Activated CD4-positive, alpha-beta memory T cell treated with anti-CD3 and anti-CD28 coated beads for 36 hours (primary cell): ENCODE measurements at regions of chr5 and their contacts with region 1.

Region 1: DNA sequence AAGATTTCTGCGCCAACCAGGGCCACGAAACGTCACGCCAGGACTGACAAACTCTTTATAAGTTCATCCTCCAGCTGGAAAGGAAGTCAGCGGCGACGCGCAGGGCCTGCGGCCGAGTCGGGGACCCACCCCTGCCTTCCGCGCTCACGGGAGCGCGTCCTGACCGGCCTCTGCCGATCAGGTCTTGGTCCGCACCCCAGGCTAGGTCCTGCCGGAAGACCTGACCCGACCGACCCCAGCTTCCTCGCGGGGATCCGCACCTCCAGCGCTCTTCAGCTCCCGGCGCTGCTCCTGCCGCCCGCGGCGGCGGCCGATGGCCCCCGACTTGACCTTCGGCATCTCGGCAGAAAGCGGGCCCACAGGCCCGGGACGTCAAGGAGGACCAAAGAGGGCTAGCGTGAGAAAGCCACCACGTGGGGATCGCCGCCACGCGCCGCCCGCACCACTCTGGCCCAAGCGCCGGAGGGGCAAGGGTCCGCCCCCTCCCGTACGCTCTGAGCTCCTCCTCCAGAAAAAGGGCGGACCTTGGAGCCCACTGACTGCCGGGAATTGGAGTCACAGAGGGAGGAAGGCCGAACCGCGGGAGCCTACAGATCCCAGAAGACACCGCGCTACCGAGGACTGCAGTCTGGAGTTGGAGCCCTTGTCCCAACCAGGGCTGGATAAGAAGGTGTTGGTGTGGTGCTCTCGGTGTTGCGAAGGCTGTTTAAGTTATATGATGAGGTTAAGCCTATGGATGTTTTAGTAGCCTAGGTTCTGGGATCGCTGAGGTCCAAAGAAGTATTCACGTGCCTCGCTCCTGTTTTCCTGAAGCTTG is at the start of gene DIMT1:
- DNase-seq: peak; percentile 97
- H3K4me3 Mint-ChIP-seq: peak within 1 kb of the TSS; percentile 100
- H3K27ac Mint-ChIP-seq: peak within 1 kb of the TSS; percentile 93
- H3K4me1 Mint-ChIP-seq: peaks cover 29% of the 10 kb centered on the region
- H3K27me3 Mint-ChIP-seq: no peaks in the 10 kb centered on the region
- total RNA-seq, gene DIMT1: 46.9 to 48.9 TPM

Region 2: DNA sequence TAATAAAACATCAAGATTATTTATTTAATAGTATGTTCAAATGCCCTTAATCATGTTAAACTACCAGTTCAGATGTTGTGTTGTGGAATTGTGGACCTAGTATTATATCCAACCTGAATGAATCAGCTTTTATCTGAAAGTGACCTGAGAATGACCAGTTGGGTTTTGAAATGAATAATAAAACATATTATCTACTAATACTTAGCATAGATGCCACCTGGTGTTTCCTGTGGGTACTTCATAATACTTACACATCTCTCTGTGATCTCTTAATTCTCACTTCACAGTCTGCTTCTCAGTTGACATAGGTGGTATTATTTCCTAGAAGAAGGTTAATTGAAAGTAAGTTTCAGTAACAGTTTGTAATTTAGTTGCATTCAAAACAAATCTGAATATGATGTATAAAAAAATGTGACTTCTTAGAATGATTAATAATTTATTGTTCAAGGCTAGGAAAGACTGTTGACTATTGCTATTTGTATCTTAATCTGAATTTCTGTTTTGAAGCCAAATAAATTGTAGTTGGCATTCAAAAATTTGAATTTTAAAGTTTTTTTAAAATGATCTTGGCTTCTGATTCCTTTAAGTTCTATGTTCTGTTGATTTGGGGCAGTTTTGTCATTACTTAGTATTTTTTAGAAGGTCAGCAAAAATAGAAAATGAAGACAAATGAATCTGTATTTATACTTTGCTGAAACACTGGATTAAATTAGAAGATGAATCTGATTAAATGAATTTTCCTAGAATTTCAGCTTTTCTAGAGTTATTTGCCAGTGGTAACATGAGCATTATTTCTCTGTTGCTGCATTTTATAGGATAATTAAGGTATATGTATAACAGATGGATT is 49.4 kb before region 1 on chr5:
- CTCF ChIA-PET with region 1: interaction called, 3 read pairs
- POLR2A ChIA-PET with region 1: no interaction called
- intact Hi-C with region 1: loop called (anchors 5 kb)
- DNase-seq: no peak
- H3K4me3 Mint-ChIP-seq: no peak overlapping the region
- H3K27ac Mint-ChIP-seq: no peak overlapping the region
- H3K4me1 Mint-ChIP-seq: peaks cover 20% of the 10 kb centered on the region
- H3K27me3 Mint-ChIP-seq: no peaks in the 10 kb centered on the region

Region 3: DNA sequence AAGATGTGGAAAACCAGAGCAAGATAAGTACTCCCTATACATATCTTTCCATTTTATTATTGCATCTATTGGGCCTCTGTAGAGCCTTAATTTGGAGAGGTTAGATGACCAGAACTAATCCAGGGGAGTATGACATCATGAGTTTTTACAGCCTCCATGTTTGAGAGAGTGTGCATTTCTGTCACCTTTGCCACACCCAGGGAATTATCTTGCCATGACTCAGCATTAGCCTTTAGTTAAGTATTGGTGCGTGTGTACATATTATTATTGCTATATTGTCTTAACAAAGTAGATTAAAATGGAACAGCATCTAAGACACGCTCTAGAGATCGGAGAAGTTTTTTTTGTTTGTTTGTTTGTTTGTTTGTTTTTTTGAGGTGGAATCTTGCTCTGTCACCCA is 27.6 kb before region 1 on chr5:
- CTCF ChIA-PET with region 1: no interaction called
- POLR2A ChIA-PET with region 1: no interaction called
- intact Hi-C with region 1: no loop called
- DNase-seq: no peak
- H3K4me3 Mint-ChIP-seq: no peak overlapping the region
- H3K27ac Mint-ChIP-seq: no peak overlapping the region
- H3K4me1 Mint-ChIP-seq: no peaks in the 10 kb centered on the region
- H3K27me3 Mint-ChIP-seq: no peaks in the 10 kb centered on the region